Ascending aorta (tissue), 2 donors: ENCODE measurements at regions of chr11 and their contacts with region 1.

Region 1: GRCh38 chr11:83819933-83820549 is 533.9 kb upstream of the CCDC90B start:
- DNase-seq: no peak
- H3K4me3 ChIP-seq: no peak overlapping the region
- H3K27ac ChIP-seq: no peak overlapping the region
- H3K4me1 ChIP-seq: no peaks in the 10 kb centered on the region
- H3K27me3 ChIP-seq: no peaks in the 10 kb centered on the region
- CTCF ChIP-seq: peak; percentile 34 to 61 (median 52)

Region 2: DNA sequence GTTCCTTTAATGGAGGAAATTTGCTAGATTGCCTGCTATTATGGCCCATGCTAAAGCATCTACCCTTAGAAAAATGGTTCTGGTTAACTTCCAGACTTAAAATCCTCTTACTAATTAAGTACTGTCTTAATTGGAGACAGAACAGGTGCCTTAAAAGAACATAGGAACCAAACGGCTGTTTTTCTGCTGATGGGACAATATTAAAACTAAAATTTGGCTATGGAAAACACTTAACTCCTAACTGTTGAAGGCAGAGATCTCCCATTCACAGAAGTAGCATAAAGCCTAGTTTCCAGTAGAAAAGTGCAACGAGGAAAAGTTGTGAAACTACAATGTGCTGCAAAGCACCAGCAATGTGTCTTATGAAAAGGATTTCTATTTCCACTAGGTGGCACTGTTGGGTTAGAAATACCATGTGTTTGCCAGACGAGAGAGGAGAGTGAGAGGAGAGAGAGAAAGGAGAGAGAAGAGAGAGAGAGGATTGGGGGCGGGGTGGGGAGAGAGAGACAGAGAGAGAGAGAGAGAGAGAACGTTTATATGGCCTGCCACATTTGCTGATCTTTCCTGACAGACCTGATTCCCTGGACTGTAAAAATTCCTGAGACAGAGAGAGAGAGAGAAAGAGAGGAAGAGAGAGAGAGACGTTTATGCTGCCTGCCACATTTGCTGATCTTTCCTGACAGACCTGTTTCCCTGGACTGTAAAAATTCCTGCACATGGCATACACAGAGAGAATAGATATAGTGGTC is 1137.9 kb before region 1 on chr11:
- intact Hi-C with region 1: loop called (anchors 10 kb)
- DNase-seq: no peak
- H3K4me3 ChIP-seq: no peak overlapping the region
- H3K27ac ChIP-seq: no peak overlapping the region
- H3K4me1 ChIP-seq: no peaks in the 10 kb centered on the region
- H3K27me3 ChIP-seq: no peaks in the 10 kb centered on the region
- CTCF ChIP-seq: peak; percentile 18 to 58 (median 56)

Region 3: GRCh38 chr11:83292709-83293456 is 527.2 kb before region 1 on chr11:
- intact Hi-C with region 1: loop called (anchors 10 kb)
- DNase-seq: no peak
- H3K4me3 ChIP-seq: no peak overlapping the region
- H3K27ac ChIP-seq: no peak overlapping the region
- H3K4me1 ChIP-seq: no peaks in the 10 kb centered on the region
- H3K27me3 ChIP-seq: no peaks in the 10 kb centered on the region
- CTCF ChIP-seq: peak in 2 of 3 experiments; percentile 46 to 55

Region 4: GRCh38 chr11:83641511-83641910 is 178.5 kb before region 1 on chr11:
- intact Hi-C with region 1: no loop called
- DNase-seq: peak in 1 of 2 donors; percentile 52
- H3K4me3 ChIP-seq: no peak overlapping the region
- H3K27ac ChIP-seq: no peak overlapping the region
- H3K4me1 ChIP-seq: no peaks in the 10 kb centered on the region
- H3K27me3 ChIP-seq: no peaks in the 10 kb centered on the region
- CTCF ChIP-seq: no peak